IMR-90 (cell line): ENCODE measurements at regions of chr6 and their contacts with region 1.

Region 1: DNA sequence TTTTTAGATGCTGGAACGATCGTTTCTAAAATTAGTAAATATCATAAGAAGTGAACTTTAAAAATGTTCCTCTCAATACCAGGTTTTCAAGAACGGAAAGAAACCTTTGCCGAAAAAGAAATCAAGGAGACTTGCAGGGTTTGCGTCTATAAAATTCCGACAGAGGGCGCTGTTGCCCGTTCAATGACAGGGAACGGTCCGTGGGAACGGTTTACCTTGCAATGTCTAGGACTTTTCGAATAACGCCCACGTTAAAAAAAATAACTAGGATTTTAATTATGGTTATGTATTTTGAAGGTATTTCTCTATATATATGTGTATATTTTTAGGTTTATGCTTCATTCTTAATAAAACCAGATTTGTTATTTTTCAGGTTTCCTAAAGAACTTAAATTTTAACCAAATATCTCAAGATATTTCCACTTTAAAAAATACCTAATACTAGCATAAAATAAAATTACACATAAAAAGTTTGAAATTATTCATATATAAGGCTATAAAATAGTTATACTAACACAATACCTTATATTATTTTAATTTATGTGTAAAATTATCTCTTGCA is 2.5 kb upstream of the TFAP2B start:
- DNase-seq: peak; percentile 55
- ATAC-seq: peak; percentile 57; the same call in 1 of the 2 replicates
- H3K4me3 ChIP-seq: peak overlapping the region; percentile 51
- H3K27ac ChIP-seq: no peak overlapping the region
- H3K4me1 ChIP-seq: no peaks in the 10 kb centered on the region
- H3K27me3 ChIP-seq: peaks cover 31% of the 10 kb centered on the region
- CTCF ChIP-seq: peak; percentile 81
- POLR2A ChIP-seq: no peak
- RAD21 ChIP-seq: peak; percentile 79

Region 2: GRCh38 chr6:50591135-50591534 is 225.1 kb before region 1 on chr6:
- CTCF ChIA-PET with region 1: no interaction called
- POLR2A ChIA-PET with region 1: no interaction called
- dilution Hi-C with region 1: no loop called
- in situ Hi-C with region 1: no loop called
- intact Hi-C with region 1: no loop called
- DNase-seq: no peak
- ATAC-seq: no peak
- H3K4me3 ChIP-seq: no peak overlapping the region
- H3K27ac ChIP-seq: no peak overlapping the region
- H3K4me1 ChIP-seq: no peaks in the 10 kb centered on the region
- H3K27me3 ChIP-seq: no peaks in the 10 kb centered on the region
- CTCF ChIP-seq: no peak
- POLR2A ChIP-seq: no peak
- RAD21 ChIP-seq: no peak

Region 3: DNA sequence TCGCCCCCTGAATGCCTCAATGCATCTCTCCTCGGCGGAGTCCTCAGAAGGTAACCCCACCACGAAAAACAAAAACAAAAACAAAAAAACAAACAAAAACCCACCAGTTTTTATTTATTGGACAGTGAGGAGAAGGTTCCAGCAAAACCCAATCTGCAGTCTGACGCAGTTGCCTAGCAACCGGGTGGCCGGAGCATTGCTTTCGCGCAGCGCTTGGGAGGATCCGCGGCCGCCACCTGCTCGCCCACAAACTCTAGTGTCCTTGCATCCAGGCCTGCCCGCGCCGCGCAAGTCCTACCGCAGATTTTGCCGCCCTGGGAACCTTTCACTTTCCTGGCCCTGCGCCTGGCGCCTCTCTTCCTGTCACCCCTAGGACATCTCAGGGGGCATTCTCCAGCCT is 20.0 kb after region 1 on chr6:
- CTCF ChIA-PET with region 1: no interaction called
- POLR2A ChIA-PET with region 1: no interaction called
- dilution Hi-C with region 1: no loop called
- in situ Hi-C with region 1: no loop called
- intact Hi-C with region 1: no loop called
- DNase-seq: no peak
- ATAC-seq: no peak
- H3K4me3 ChIP-seq: no peak overlapping the region
- H3K27ac ChIP-seq: no peak overlapping the region
- H3K4me1 ChIP-seq: no peaks in the 10 kb centered on the region
- H3K27me3 ChIP-seq: peaks cover 12% of the 10 kb centered on the region
- CTCF ChIP-seq: no peak
- POLR2A ChIP-seq: no peak
- RAD21 ChIP-seq: no peak

Region 4: DNA sequence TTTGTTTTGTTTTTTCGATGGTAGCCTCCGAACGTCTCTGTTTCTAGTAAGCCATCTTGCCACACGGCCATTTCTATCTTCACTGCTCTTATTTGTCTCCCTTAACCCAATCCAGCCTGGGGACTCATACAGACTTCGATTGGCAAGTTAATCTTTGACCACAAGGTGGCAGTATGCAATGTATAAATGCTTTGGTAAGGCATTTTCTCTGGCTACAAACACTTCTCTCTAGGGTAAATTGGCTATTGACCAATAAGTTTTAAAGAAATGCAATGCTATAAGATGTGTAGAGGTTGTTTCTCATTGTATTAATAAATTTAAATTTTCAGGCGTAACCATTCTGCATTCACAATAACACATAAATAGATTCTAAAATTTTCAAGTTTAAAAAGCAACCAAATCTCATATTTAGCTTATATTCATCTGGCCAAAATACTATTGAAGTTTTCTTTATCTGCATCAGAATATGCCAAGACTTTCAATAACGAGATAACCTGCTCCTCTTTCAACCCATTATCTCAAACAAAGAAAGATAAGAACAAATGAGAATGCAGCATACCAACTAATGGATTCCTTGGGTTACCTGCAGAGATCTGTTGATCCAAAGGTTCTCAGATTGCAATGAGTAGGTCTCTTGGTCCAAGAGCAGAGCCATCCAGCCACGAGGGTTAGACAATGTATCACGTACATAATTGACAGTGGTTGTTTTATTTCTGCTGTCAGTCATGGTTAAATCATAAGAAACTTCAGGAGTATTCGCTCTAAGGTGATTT is 1039.3 kb after region 1 on chr6:
- CTCF ChIA-PET with region 1: no interaction called
- POLR2A ChIA-PET with region 1: no interaction called
- dilution Hi-C with region 1: no loop called
- in situ Hi-C with region 1: no loop called
- intact Hi-C with region 1: loop called (anchors 10 kb)
- DNase-seq: peak; percentile 67
- ATAC-seq: peak; percentile 54; the same call in 1 of the 2 replicates
- H3K4me3 ChIP-seq: no peak overlapping the region
- H3K27ac ChIP-seq: no peak overlapping the region
- H3K4me1 ChIP-seq: no peaks in the 10 kb centered on the region
- H3K27me3 ChIP-seq: no peaks in the 10 kb centered on the region
- CTCF ChIP-seq: peak; percentile 61
- POLR2A ChIP-seq: no peak
- RAD21 ChIP-seq: peak; percentile 40

Region 5: GRCh38 chr6:51949468-51949867 is 1133.3 kb after region 1 on chr6:
- CTCF ChIA-PET with region 1: no interaction called
- POLR2A ChIA-PET with region 1: interaction called, 15 read pairs
- dilution Hi-C with region 1: no loop called
- in situ Hi-C with region 1: no loop called
- intact Hi-C with region 1: no loop called
- DNase-seq: no peak
- ATAC-seq: no peak
- H3K4me3 ChIP-seq: no peak overlapping the region
- H3K27ac ChIP-seq: no peak overlapping the region
- H3K4me1 ChIP-seq: no peaks in the 10 kb centered on the region
- H3K27me3 ChIP-seq: no peaks in the 10 kb centered on the region
- CTCF ChIP-seq: no peak
- POLR2A ChIP-seq: no peak
- RAD21 ChIP-seq: no peak

Region 6: DNA sequence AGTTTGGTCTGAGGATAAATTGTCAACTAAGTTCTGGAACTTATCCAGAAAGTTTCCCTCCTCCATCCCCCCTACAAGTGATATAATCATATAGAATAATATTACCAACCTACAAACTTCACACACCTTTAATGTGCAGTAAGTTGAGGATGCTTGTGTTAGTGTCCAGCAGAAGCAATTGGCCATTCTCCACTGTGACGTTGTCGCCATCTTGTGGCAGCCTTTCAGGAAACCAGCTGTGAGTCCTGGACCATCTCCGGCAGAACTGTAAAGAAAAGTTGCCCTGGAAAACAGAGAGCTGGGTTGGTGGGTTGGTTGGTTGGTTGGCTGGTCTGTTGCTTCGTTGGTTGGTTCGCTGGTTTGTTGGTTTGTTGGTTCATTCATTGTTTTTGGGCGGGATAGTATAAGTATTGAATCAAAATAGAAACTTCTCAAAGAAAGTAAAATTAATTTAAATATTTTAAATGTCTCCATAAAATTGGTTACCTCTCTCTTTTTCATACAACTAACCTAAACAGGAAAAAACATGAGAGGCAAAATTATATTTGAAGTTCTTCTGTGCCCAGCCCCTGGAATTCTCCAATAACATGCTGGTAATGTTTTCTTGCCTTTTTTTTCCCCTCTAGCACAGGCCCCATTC is 1143.7 kb after region 1 on chr6:
- CTCF ChIA-PET with region 1: no interaction called
- POLR2A ChIA-PET with region 1: no interaction called
- dilution Hi-C with region 1: no loop called
- in situ Hi-C with region 1: no loop called
- intact Hi-C with region 1: loop called (anchors 1 kb)
- DNase-seq: peak; percentile 59
- ATAC-seq: peak; percentile 81
- H3K4me3 ChIP-seq: no peak overlapping the region
- H3K27ac ChIP-seq: no peak overlapping the region
- H3K4me1 ChIP-seq: no peaks in the 10 kb centered on the region
- H3K27me3 ChIP-seq: no peaks in the 10 kb centered on the region
- CTCF ChIP-seq: peak; percentile 73
- POLR2A ChIP-seq: no peak
- RAD21 ChIP-seq: peak; percentile 74

Region 7: GRCh38 chr6:52020945-52021570 is 1204.9 kb after region 1 on chr6:
- CTCF ChIA-PET with region 1: interaction called, 4 read pairs
- POLR2A ChIA-PET with region 1: no interaction called
- dilution Hi-C with region 1: no loop called
- in situ Hi-C with region 1: loop called (anchors 25 kb)
- intact Hi-C with region 1: loop called (anchors 1 kb)
- DNase-seq: peak; percentile 34
- ATAC-seq: no peak
- H3K4me3 ChIP-seq: no peak overlapping the region
- H3K27ac ChIP-seq: no peak overlapping the region
- H3K4me1 ChIP-seq: no peaks in the 10 kb centered on the region
- H3K27me3 ChIP-seq: no peaks in the 10 kb centered on the region; the same call in 1 of the 2 replicates
- CTCF ChIP-seq: peak; percentile 70
- POLR2A ChIP-seq: no peak
- RAD21 ChIP-seq: peak; percentile 76

Region 8: DNA sequence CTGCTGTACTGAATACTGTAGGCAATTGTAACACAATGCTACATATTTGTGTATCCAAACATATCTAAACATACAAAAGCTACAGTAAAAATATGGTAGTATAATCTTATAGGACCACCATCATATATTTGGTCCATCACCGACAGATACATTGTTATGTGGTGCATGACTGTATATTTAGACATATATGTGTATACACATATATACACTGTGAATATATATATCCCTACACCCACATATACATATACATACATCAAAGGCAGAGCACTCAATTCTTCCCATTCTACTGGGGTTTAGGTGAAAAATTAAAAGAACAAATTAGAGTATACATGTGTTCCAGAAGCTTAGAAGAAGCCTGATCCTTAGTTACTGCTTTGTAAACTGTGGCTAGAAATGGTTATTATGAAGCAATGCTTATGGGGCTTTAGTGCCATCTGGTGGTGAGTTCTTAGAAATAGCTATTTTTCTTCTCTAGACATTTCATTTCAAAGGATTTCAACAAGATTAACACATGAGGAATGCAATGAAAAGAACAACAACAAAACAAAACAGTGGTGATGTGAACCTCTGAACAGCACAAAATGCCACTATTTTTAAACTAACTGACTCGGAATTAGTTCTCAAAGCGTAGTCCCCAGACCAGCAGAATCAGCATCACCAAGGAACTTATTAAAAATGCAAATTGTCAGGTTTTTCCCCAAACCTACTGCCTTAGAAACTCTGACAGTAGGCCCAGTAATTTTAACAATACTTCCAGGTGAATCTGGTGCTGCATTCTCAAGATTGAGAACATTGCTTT is 1233.3 kb after region 1 on chr6:
- CTCF ChIA-PET with region 1: no interaction called
- POLR2A ChIA-PET with region 1: no interaction called
- dilution Hi-C with region 1: no loop called
- in situ Hi-C with region 1: no loop called
- intact Hi-C with region 1: loop called (anchors 1 kb)
- DNase-seq: peak; percentile 37
- ATAC-seq: peak; percentile 76
- H3K4me3 ChIP-seq: no peak overlapping the region
- H3K27ac ChIP-seq: no peak overlapping the region
- H3K4me1 ChIP-seq: no peaks in the 10 kb centered on the region
- H3K27me3 ChIP-seq: no peaks in the 10 kb centered on the region
- CTCF ChIP-seq: peak; percentile 65
- POLR2A ChIP-seq: no peak
- RAD21 ChIP-seq: peak; percentile 29; the same call in 1 of the 2 replicates